ENCODE measurements at regions of chr15 and their contacts with region 1.

Region 1: DNA sequence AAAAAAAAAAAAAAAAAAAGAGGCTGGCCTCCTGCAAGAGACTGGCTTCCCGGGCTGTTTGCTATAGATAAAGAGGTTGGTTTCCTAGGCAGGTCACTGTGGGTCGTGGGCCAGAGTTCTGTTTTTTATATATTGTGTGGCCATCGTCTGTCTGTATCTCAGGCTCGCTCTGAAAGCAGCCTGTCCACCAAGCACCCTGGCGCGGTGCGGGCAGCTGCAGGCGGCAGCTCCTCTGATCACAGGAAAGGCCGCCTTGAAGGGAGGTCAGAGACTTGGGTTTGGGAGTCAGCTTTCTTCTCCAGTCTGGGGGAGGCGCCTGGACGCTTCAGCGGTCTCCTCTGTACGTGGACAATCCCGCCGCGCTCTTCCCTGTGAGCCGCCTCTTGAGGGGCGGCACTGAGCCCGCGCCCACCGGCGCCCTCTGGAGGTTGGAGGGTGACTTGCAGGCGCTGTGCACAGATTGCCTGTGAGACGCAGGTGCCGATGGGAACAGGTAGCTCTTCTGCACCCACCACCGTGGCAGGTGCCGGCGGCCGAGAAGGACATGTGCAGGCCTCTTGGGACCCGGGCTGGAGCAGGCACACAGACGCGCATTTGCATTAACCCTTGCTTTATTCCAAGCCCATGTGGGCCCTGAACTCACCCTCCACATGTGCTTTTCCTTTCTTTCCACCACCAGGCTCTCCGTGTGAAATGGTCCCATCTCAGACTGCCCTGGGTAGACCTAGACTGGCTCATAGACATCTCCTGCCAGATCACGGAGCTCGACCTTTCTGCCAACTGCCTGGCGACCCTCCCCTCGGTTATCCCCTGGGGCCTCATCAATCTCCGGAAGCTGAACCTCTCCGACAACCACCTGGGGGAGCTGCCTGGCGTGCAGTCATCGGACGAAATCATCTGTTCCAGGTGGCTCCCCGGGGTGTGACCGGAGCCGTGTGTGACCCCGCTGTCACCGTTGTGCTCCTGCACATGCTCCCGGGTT is 89.3 kb downstream of the LRRK1 start:
- DNase-seq: peak; percentile 95
- ATAC-seq: peak; percentile 86
- H3K4me3 Mint-ChIP-seq: peak overlapping the region; percentile 80
- H3K27ac Mint-ChIP-seq: no peak overlapping the region
- H3K4me1 Mint-ChIP-seq: peaks cover 35% of the 10 kb centered on the region
- H3K27me3 Mint-ChIP-seq: peaks cover 17% of the 10 kb centered on the region
- CTCF ChIP-seq: peak; percentile 98

Region 2: DNA sequence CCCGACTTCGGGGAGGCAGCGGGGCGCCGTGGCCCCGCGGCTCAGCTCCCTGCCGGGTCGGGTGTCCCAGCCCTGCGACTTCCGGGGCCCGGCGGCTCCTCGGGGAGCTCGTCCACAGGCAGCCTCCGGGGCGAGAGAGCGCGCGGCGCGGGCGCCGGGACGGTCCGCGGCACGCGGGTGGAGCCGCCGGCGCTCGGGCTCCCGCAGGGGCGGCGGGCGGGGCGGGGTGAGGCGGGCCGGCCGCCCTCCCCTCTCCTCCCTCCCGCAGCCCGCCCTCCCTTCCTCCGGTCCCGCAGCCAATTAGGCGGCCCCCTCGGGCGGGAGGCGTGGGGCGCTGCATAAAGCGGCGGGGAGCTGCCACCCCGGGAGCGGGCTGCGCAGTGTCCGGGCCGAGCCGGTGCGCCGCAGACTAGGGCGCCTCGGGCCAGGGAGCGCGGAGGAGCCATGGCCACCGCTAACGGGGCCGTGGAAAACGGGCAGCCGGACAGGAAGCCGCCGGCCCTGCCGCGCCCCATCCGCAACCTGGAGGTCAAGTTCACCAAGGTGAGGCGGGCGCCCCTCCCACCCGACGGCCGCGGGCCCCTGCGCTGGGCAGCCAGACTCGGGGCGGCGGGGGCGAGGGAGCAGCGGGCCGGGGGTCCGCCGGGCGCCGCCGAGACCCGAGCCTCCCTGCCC is 128.8 kb before region 1 on chr15 and contains the start of gene ALDH1A3:
- CTCF ChIA-PET with region 1: interaction called, 45 read pairs
- POLR2A ChIA-PET with region 1: no interaction called
- DNase-seq: peak; percentile 48
- ATAC-seq: peak; percentile 11
- H3K4me3 Mint-ChIP-seq: peak within 1 kb of the TSS; percentile 89
- H3K27ac Mint-ChIP-seq: no peak within 1 kb of the TSS
- H3K4me1 Mint-ChIP-seq: peaks cover 30% of the 10 kb centered on the region
- H3K27me3 Mint-ChIP-seq: peaks cover 83% of the 10 kb centered on the region
- CTCF ChIP-seq: no peak
- total RNA-seq, gene ALDH1A3: 9.9 to 14.0 TPM (median 10.7 TPM) in 3 replicates

Region 3: GRCh38 chr15:100909991-100910955 is 98.2 kb before region 1 on chr15:
- CTCF ChIA-PET with region 1: interaction called, 253 read pairs
- POLR2A ChIA-PET with region 1: no interaction called
- DNase-seq: no peak
- ATAC-seq: peak; percentile 25
- H3K4me3 Mint-ChIP-seq: no peak overlapping the region
- H3K27ac Mint-ChIP-seq: peak overlapping the region; percentile 60; the same call in 1 of the 2 replicates
- H3K4me1 Mint-ChIP-seq: peaks cover 23% of the 10 kb centered on the region
- H3K27me3 Mint-ChIP-seq: no peaks in the 10 kb centered on the region
- CTCF ChIP-seq: no peak

Region 4: GRCh38 chr15:100973351-100974111 is 34.9 kb before region 1 on chr15:
- CTCF ChIA-PET with region 1: interaction called, 27 read pairs
- POLR2A ChIA-PET with region 1: no interaction called
- DNase-seq: peak; percentile 51
- ATAC-seq: peak; percentile 85
- H3K4me3 Mint-ChIP-seq: peak overlapping the region; percentile 59
- H3K27ac Mint-ChIP-seq: no peak overlapping the region
- H3K4me1 Mint-ChIP-seq: peaks cover 17% of the 10 kb centered on the region
- H3K27me3 Mint-ChIP-seq: peaks cover 48% of the 10 kb centered on the region
- CTCF ChIP-seq: no peak

Region 5: DNA sequence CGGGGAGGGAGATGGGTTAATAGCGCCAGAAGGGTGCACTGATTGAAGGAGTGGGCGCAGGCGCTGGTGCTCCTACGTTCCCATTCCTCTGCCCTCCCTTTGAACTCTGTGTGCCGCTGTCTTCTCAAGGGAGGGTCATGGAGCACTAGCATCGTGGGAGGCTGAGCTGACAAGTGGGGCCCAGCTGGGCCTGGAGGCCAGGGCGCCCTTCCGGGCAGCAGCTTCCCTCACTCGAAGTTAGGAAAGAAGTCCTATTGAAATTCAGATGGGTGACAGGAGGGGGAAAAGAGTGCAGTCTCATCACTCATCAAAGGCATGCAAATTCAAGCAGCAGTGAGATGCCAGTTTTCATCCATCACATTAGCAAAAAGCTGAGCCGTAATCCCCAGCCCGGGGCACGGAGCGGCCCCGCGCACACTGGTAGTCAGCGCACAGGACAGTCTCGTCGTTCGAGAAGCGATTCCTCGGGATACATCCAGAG is 38.9 kb after region 1 on chr15:
- CTCF ChIA-PET with region 1: interaction called, 12 read pairs
- POLR2A ChIA-PET with region 1: no interaction called
- DNase-seq: no peak
- ATAC-seq: peak; percentile 64
- H3K4me3 Mint-ChIP-seq: peak overlapping the region; percentile 44
- H3K27ac Mint-ChIP-seq: no peak overlapping the region
- H3K4me1 Mint-ChIP-seq: peaks cover 49% of the 10 kb centered on the region
- H3K27me3 Mint-ChIP-seq: peaks cover 22% of the 10 kb centered on the region
- CTCF ChIP-seq: no peak

Region 6: DNA sequence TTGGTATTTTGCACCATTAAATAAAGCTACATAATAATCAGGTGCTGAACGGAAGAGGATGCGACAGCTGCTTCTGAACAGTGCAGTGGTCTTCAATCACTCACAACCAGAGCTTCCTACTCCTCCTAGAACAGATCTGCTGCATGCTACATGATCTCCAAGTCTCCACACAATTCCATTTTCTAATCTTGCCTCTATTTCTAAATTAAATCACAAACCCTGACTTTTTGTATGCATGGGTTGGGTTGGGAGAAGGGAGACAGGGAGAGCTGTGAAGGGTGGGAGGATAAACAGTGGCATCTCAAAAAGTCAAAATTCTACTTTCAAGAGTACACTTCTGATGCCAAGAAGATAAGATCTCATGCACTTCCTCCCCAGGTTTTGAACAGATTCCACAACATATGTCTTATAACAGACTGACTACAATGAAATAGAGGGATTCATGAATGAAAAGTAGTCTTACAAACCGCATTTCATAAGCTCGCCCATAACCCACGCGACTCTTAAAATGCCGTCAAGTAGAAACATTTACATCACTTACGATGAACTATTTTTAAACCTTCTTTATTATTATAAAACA is 186.2 kb after region 1 on chr15:
- CTCF ChIA-PET with region 1: interaction called, 11 read pairs
- POLR2A ChIA-PET with region 1: no interaction called
- DNase-seq: no peak
- ATAC-seq: no peak
- H3K4me3 Mint-ChIP-seq: no peak overlapping the region
- H3K27ac Mint-ChIP-seq: peak overlapping the region; percentile 42
- H3K4me1 Mint-ChIP-seq: peaks cover 74% of the 10 kb centered on the region
- H3K27me3 Mint-ChIP-seq: no peaks in the 10 kb centered on the region
- CTCF ChIP-seq: no peak

Region 7: DNA sequence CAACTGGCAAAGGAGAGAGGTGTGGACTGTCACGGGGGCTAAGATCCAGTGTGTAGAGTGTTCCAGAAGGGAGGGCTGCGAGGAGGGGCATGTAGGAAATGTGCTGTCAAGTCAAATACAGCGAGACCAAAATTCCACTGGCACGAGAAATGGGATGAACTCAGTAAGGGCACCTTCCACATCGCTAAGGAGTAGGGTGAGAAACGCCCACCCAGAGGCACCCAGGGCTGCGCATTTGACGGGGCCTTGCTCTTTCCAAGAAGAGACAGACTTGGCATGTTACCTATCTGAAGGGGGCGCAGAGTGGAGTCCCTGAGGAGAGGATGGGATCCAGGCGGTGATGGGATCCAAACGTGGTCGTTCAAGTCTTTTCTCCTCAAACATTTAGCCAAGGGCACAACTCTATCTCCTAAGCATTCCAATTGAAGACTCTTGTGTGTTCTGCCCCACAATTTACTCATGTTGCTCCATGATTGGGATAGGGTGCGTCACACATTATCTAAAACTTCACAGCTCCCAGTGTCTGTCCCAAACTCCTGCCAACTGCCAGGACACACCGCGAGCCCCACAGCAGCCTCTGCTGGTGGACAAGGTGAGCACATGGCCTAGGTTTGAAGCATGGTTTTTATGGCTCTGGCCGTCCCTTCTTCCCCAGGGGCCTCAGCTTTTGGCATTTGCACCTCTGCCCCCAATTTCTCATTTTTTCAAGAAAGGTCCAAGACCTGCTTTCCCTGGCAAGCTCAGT is 261.2 kb after region 1 on chr15:
- CTCF ChIA-PET with region 1: interaction called, 38 read pairs
- POLR2A ChIA-PET with region 1: no interaction called
- DNase-seq: no peak
- ATAC-seq: peak; percentile 74
- H3K4me3 Mint-ChIP-seq: no peak overlapping the region
- H3K27ac Mint-ChIP-seq: no peak overlapping the region
- H3K4me1 Mint-ChIP-seq: peaks cover 11% of the 10 kb centered on the region
- H3K27me3 Mint-ChIP-seq: no peaks in the 10 kb centered on the region
- CTCF ChIP-seq: no peak